ENCODE measurements at regions of chrX and their contacts with region 1.

Region 1: GRCh38 chrX:131854581-131854980 is 168.5 kb upstream of the STK26 start:
- DNase-seq: no peak
- ATAC-seq: no peak
- H3K4me3 Mint-ChIP-seq: no peak overlapping the region
- H3K27ac Mint-ChIP-seq: no peak overlapping the region
- H3K4me1 Mint-ChIP-seq: peaks cover 3% of the 10 kb centered on the region; the same call in 1 of the 2 replicates
- H3K27me3 Mint-ChIP-seq: no peaks in the 10 kb centered on the region
- CTCF ChIP-seq: no peak

Region 2: DNA sequence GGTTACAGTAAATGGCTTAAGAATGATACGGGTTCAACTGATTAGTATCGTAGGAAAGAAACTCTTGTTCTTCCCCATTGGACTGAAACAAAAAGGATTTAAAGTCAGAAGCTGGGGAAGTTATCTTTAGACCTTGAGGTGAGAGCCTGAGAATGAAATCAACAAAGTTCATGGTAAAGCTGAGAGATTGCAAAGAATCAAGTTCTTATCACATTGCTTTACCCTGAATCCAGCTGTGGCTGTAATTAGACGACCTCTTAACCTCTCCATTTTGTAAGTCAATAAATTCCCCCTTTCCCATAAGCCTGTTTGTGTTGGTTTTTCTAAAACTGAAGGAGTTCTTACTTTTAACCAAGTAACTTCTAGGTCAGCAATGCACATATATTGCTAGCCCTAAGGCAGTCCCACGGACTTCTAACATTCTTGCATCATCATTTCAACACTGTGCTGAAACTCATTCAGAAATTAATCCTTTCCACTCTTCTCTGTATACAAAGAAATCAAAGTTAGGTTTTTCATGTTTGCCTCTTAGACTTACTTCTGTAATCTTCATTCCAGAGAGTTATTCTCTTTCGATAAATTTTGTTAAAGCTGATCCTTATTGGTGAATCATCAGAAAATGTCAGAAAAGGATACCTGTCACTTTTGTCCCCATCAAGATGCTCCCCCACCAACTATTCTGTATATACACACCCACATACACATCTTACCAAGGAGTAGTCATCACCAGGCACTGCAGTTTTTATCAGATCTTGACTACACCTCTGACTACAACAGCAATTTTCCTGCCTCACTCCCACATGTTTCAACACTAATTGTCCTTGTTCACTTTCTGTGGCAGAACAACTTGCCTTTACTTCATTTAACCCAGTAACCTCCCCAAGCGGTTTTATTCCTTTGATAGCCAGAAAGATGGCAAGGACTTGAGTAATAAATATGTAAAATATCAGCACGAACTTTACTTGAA is 90.6 kb after region 1 on chrX:
- CTCF ChIA-PET with region 1: no interaction called
- POLR2A ChIA-PET with region 1: no interaction called
- DNase-seq: no peak
- ATAC-seq: no peak
- H3K4me3 Mint-ChIP-seq: no peak overlapping the region
- H3K27ac Mint-ChIP-seq: no peak overlapping the region
- H3K4me1 Mint-ChIP-seq: no peaks in the 10 kb centered on the region
- H3K27me3 Mint-ChIP-seq: no peaks in the 10 kb centered on the region; the same call in 1 of the 2 replicates
- CTCF ChIP-seq: no peak

Region 3: DNA sequence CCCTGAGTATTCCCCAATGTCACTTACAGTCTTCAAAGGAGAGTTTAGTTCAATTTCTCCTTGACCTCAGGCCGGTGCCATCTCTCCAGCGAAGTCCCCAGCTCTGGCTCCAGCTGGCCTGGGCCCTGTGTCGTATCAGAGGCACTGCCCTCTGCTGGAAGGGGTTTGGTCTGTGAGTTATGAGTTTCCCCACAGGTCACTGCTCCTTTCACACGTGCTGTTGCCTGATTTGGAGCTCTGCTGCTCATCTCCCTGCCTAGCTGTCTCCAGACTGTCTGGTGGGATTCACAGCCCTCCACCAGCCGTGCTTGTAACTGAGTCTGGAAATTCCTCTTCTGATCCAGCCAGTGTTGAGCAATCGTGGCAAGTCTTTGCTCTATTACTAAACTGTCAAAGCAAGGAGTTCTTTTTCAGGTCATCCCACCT is 364.8 kb after region 1 on chrX and contains the start of gene RAP2C:
- CTCF ChIA-PET with region 1: interaction called, 14 read pairs
- POLR2A ChIA-PET with region 1: no interaction called
- DNase-seq: peak; percentile 66
- ATAC-seq: peak; percentile 69
- H3K4me3 Mint-ChIP-seq: peak within 1 kb of the TSS; percentile 76
- H3K27ac Mint-ChIP-seq: peak within 1 kb of the TSS; percentile 91
- H3K4me1 Mint-ChIP-seq: peaks cover 18% of the 10 kb centered on the region
- H3K27me3 Mint-ChIP-seq: no peaks in the 10 kb centered on the region
- CTCF ChIP-seq: no peak
- total RNA-seq, gene RAP2C: 20.5 to 25.2 TPM (median 25.0 TPM) in 3 replicates

Measured in WTC11 (cell line).